RWPE1 (cell line): ENCODE measurements at regions of chr7 and their contacts with region 1.

Region 1: DNA sequence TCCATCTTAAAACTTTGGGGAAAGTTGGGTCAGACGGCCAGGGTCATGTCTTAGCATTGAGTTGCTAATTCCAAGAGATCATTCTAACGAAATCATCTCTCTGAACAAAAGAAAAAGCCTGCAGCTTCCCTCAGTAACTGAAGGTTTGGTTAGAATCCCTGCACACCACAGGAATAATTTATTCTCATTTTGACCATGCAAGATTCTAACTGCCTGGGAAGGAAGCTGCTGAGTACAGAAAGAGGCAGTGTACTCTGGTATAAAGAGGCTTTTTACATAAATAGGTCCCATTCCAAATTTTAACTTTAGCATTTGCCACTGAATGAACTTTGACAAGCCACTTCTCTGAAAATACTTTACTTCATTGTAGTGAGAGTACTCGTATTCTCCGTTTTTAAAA is 76.9 kb upstream of the RSBN1L start:
- DNase-seq: no peak
- H3K27ac ChIP-seq: no peak overlapping the region
- CTCF ChIP-seq: no peak

Region 2: DNA sequence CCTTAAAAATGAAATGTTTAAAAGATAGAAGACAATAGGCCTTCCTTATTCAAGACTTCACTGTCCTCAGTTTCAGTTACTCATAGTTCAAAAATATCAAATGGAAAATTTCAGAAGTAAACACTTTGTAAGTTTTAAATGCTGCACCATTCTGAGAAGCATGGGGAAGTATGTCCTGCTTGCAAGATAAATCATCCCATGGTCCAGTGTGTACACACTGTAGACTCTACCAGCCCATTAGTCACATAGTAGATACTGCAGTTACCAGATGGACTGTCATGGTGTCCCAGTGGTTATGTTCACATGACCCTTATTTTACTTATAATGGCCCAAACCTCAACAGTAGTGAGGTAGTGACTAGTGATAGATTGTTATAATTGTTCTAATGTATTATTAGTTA is 12.8 kb before region 1 on chr7:
- CTCF ChIA-PET with region 1: interaction called, 11 read pairs
- POLR2A ChIA-PET with region 1: no interaction called
- DNase-seq: no peak
- H3K27ac ChIP-seq: no peak overlapping the region
- CTCF ChIP-seq: no peak

Region 3: DNA sequence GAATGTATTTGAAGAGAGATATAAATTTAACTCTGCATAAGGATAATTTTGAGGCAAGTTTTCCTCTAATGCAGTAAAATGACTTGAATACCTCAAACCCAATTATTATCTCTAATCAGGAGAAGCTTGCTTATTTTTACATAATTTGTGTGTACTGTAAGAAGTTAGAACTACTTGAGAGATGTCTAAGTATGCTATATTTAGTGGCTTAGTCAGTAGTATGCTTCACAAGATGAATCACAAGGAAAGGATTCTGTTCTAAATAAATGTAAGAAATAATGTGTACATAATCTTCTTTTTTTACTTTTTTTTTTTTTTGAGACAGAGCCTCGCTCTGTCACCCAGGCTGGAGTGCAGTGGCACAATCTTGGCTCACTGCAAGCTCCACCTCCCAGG is 193.0 kb after region 1 on chr7:
- CTCF ChIA-PET with region 1: no interaction called
- POLR2A ChIA-PET with region 1: no interaction called
- DNase-seq: peak; percentile 12
- H3K27ac ChIP-seq: no peak overlapping the region
- CTCF ChIP-seq: no peak